ENCODE measurements at regions of chr5 and their contacts with region 1.

Region 1: GRCh38 chr5:95050708-95051107 is 234.2 kb downstream of the MCTP1 start:
- DNase-seq: no peak
- ATAC-seq: peak; percentile 10; the same call in 2 of the 3 replicates
- H3K4me3 ChIP-seq: no peak overlapping the region
- H3K27ac ChIP-seq: no peak overlapping the region
- H3K4me1 ChIP-seq: no peaks in the 10 kb centered on the region
- H3K27me3 ChIP-seq: no peaks in the 10 kb centered on the region
- CTCF ChIP-seq: no peak
- EP300 ChIP-seq: no peak
- POLR2A ChIP-seq: no peak
- RAD21 ChIP-seq: no peak

Region 2: GRCh38 chr5:95063492-95063891 is 12.8 kb after region 1 on chr5:
- CTCF ChIA-PET with region 1: interaction called, 8 read pairs
- POLR2A ChIA-PET with region 1: interaction called, 6 read pairs
- RAD21 ChIA-PET with region 1: interaction called, 14 read pairs
- SMC1A ChIA-PET with region 1: interaction called, 62 read pairs
- in situ Hi-C with region 1: no loop called
- intact Hi-C with region 1: no loop called
- DNase-seq: no peak
- ATAC-seq: no peak
- H3K4me3 ChIP-seq: no peak overlapping the region
- H3K27ac ChIP-seq: no peak overlapping the region
- H3K4me1 ChIP-seq: peaks cover 1% of the 10 kb centered on the region
- H3K27me3 ChIP-seq: no peaks in the 10 kb centered on the region
- CTCF ChIP-seq: no peak
- EP300 ChIP-seq: no peak
- POLR2A ChIP-seq: no peak
- RAD21 ChIP-seq: no peak

Region 3: GRCh38 chr5:95134326-95134725 is 83.6 kb after region 1 on chr5:
- CTCF ChIA-PET with region 1: no interaction called
- POLR2A ChIA-PET with region 1: no interaction called
- RAD21 ChIA-PET with region 1: no interaction called
- SMC1A ChIA-PET with region 1: no interaction called
- in situ Hi-C with region 1: no loop called
- intact Hi-C with region 1: no loop called
- DNase-seq: no peak
- ATAC-seq: no peak
- H3K4me3 ChIP-seq: no peak overlapping the region
- H3K27ac ChIP-seq: no peak overlapping the region
- H3K4me1 ChIP-seq: no peaks in the 10 kb centered on the region
- H3K27me3 ChIP-seq: peaks cover 0 to 5% of the 10 kb centered on the region in 2 experiments; a peak in 1 of 4 replicates
- CTCF ChIP-seq: no peak
- EP300 ChIP-seq: no peak
- POLR2A ChIP-seq: no peak
- RAD21 ChIP-seq: no peak

Measured in GM12878 (cell line).